Prostate gland (tissue), 2 donors: ENCODE measurements at regions of chr6 and their contacts with region 1.

Region 1: DNA sequence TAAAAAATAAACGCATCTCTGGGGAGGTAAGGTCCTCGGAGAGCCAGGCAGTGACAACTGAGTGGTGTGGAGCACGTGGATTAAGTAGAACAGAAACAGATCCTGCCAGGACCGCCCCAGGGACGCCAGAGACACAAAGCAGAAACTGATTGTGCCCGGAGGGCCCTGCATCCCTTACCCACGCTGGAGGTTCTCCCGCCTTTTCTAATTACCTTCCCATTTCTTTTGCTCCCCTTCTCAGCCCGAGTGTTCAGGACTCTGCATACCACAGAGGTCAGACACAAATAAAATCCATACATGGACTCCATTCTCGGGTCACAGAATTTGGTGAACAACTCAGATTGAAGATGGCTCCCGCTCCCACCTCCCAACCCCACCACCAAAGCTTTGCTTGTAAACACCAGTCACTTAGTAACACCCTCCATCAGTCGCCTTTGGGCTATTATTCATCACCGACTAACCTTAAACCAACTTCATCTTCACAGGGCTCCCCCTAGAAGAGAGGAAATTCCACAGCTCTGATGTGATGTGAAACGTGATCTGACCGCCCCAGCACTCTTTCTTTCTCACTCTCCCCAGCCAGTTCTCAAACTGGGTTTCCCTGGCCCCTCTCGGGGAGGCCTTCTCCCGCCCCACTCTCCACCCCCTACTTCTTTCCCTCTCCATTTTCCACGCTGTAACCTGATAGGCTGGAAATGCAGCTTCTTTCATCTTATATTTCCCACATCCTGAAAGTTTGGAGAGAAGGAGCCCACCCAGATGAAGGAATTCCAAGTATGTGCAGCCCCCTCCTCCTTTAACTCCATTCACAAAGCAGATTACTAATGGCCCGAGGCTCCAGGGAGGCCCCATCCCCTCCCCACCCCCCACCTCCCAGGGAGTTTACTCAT is 32.5 kb upstream of the PIM1 start:
- DNase-seq: no peak
- H3K4me3 ChIP-seq: no peak overlapping the region
- H3K27ac ChIP-seq: peak overlapping the region; percentile 18 to 32
- H3K4me1 ChIP-seq: no peaks in the 10 kb centered on the region
- H3K27me3 ChIP-seq: no peaks in the 10 kb centered on the region
- CTCF ChIP-seq: no peak
- POLR2A ChIP-seq: no peak

Region 2: GRCh38 chr6:37059344-37060206 is 77.9 kb before region 1 on chr6:
- intact Hi-C with region 1: loop called (anchors 5 kb)
- DNase-seq: peak; percentile 37
- H3K4me3 ChIP-seq: no peak overlapping the region
- H3K27ac ChIP-seq: peak overlapping the region; percentile 45 to 76
- H3K4me1 ChIP-seq: no peaks in the 10 kb centered on the region
- H3K27me3 ChIP-seq: no peaks in the 10 kb centered on the region
- CTCF ChIP-seq: peak in 3 of 4 experiments; percentile 22 to 69 (median 48)
- POLR2A ChIP-seq: no peak